CD8-positive, alpha-beta T cell (primary cell): ENCODE measurements at regions of chr11 and their contacts with region 1.

Region 1: GRCh38 chr11:94973099-94973968 is at the starts of genes CWC15 and KDM4D:
- DNase-seq: peak; percentile 90 to 97 (median 95)
- ATAC-seq: peak; percentile 98
- H3K4me3 ChIP-seq: peak within 1 kb of the TSS; percentile 70 to 90
- H3K4me3 Mint-ChIP-seq: peak within 1 kb of the TSS; percentile 99
- H3K27ac ChIP-seq: peak within 1 kb of the TSS; percentile 72 to 83
- H3K27ac Mint-ChIP-seq: peak within 1 kb of the TSS; percentile 99
- H3K4me1 ChIP-seq: peaks cover 14% of the 10 kb centered on the region
- H3K4me1 Mint-ChIP-seq: peaks cover 34% of the 10 kb centered on the region
- H3K27me3 ChIP-seq: no peaks in the 10 kb centered on the region
- H3K27me3 Mint-ChIP-seq: no peaks in the 10 kb centered on the region
- CTCF ChIP-seq: no peak
- total RNA-seq, gene CWC15: 127 to 129 TPM
- total RNA-seq, gene KDM4D: 0.14 TPM in 1 of 2 experiments, not detected in the other

Region 2: DNA sequence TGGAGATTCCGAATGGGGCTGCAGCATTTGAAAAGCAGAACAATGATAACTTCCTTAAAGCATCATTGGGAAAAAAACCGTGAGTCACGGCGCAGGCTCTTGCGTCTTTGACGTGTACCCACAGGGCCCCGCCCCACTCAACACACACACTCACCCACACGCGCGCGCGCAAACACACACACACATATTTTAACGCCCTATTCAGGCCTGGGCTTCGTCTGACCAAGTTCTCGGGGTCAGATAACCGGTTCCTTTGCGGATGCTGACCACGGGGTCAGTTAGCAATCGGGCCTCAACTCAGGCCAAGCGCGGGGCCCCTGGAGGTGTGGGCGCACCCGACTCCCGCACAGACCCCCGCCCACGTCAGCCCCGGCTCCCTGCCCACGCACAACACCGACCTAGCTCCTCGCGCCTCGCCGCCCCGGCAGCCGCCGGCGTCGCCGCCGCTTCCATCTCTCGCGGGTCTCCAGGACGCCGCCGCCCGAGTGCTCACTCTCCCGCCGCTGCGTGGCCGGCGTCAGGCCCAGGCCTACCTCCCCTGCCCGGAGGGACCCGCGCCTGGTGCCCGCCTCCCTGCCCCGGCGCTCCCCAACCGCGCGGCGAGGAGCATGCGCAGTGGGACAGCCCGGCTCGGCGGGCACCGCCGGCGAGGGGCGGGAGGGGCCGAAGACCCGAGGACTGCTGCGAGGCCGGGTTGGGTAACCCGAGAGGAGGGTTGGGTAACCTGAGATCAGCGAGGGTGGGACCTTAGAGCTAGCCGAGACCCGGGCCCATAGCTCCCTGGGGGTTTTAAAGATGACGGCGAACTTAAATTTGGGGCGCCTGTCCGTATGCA is 1775.7 kb before region 1 on chr11 and contains the start of gene SLC36A4:
- CTCF ChIA-PET with region 1: no interaction called
- POLR2A ChIA-PET with region 1: no interaction called
- intact Hi-C with region 1: loop called (anchors 10 kb)
- DNase-seq: peak; percentile 70 to 94 (median 86)
- ATAC-seq: peak; percentile 88
- H3K4me3 ChIP-seq: peak within 1 kb of the TSS; percentile 69 to 85
- H3K4me3 Mint-ChIP-seq: peak within 1 kb of the TSS; percentile 97
- H3K27ac ChIP-seq: peak within 1 kb of the TSS; percentile 72 to 93
- H3K27ac Mint-ChIP-seq: peak within 1 kb of the TSS; percentile 96
- H3K4me1 ChIP-seq: peaks cover 6% of the 10 kb centered on the region
- H3K4me1 Mint-ChIP-seq: peaks cover 31% of the 10 kb centered on the region
- H3K27me3 ChIP-seq: no peaks in the 10 kb centered on the region
- H3K27me3 Mint-ChIP-seq: no peaks in the 10 kb centered on the region
- CTCF ChIP-seq: no peak
- total RNA-seq, gene SLC36A4: 16.8 to 17.6 TPM

Region 3: GRCh38 chr11:93784152-93784934 is 1189.0 kb before region 1 on chr11 and contains the start of gene MED17:
- CTCF ChIA-PET with region 1: no interaction called
- POLR2A ChIA-PET with region 1: no interaction called
- intact Hi-C with region 1: loop called (anchors 10 kb)
- DNase-seq: peak; percentile 68 to 94 (median 89)
- ATAC-seq: peak; percentile 94
- H3K4me3 ChIP-seq: peak within 1 kb of the TSS; percentile 99 to 100
- H3K4me3 Mint-ChIP-seq: peak within 1 kb of the TSS; percentile 96
- H3K27ac ChIP-seq: peak within 1 kb of the TSS; percentile 94 to 96
- H3K27ac Mint-ChIP-seq: peak within 1 kb of the TSS; percentile 94
- H3K4me1 ChIP-seq: peaks cover 28% of the 10 kb centered on the region
- H3K4me1 Mint-ChIP-seq: peaks cover 40% of the 10 kb centered on the region
- H3K27me3 ChIP-seq: no peaks in the 10 kb centered on the region
- H3K27me3 Mint-ChIP-seq: no peaks in the 10 kb centered on the region
- CTCF ChIP-seq: peak; percentile 52
- total RNA-seq, gene MED17: 63.7 to 65.9 TPM

Region 4: GRCh38 chr11:94543695-94544645 is 429.4 kb before region 1 on chr11 and contains the start of gene FUT4:
- CTCF ChIA-PET with region 1: no interaction called
- POLR2A ChIA-PET with region 1: interaction called, 3 read pairs
- intact Hi-C with region 1: loop called in 1 of 2 experiments (anchors 5 kb)
- DNase-seq: peak; percentile 26 to 82 (median 69)
- ATAC-seq: peak; percentile 76
- H3K4me3 ChIP-seq: peak within 1 kb of the TSS; percentile 65 to 77
- H3K4me3 Mint-ChIP-seq: peak within 1 kb of the TSS; percentile 99
- H3K27ac ChIP-seq: peak within 1 kb of the TSS; percentile 87 to 90
- H3K27ac Mint-ChIP-seq: peak within 1 kb of the TSS; percentile 100
- H3K4me1 ChIP-seq: peaks cover 22% of the 10 kb centered on the region
- H3K4me1 Mint-ChIP-seq: peaks cover 39% of the 10 kb centered on the region
- H3K27me3 ChIP-seq: no peaks in the 10 kb centered on the region
- H3K27me3 Mint-ChIP-seq: no peaks in the 10 kb centered on the region
- CTCF ChIP-seq: no peak
- total RNA-seq, gene FUT4: 4.7 to 5.2 TPM

Region 5: GRCh38 chr11:95089620-95090542 is 116.5 kb after region 1 on chr11 and contains the start of gene ENDOD1:
- CTCF ChIA-PET with region 1: no interaction called
- POLR2A ChIA-PET with region 1: interaction called, 12 read pairs
- intact Hi-C with region 1: loop called (anchors 1 to 2 kb)
- DNase-seq: peak; percentile 75 to 92 (median 83)
- ATAC-seq: peak; percentile 94
- H3K4me3 ChIP-seq: peak within 1 kb of the TSS; percentile 66 to 78
- H3K4me3 Mint-ChIP-seq: peak within 1 kb of the TSS; percentile 93
- H3K27ac ChIP-seq: peak within 1 kb of the TSS; percentile 77 to 84
- H3K27ac Mint-ChIP-seq: peak within 1 kb of the TSS; percentile 99
- H3K4me1 ChIP-seq: peaks cover 25% of the 10 kb centered on the region
- H3K4me1 Mint-ChIP-seq: peaks cover 50% of the 10 kb centered on the region
- H3K27me3 ChIP-seq: no peaks in the 10 kb centered on the region
- H3K27me3 Mint-ChIP-seq: no peaks in the 10 kb centered on the region
- CTCF ChIP-seq: no peak
- total RNA-seq, gene ENDOD1: 5.6 to 5.9 TPM

Region 6: DNA sequence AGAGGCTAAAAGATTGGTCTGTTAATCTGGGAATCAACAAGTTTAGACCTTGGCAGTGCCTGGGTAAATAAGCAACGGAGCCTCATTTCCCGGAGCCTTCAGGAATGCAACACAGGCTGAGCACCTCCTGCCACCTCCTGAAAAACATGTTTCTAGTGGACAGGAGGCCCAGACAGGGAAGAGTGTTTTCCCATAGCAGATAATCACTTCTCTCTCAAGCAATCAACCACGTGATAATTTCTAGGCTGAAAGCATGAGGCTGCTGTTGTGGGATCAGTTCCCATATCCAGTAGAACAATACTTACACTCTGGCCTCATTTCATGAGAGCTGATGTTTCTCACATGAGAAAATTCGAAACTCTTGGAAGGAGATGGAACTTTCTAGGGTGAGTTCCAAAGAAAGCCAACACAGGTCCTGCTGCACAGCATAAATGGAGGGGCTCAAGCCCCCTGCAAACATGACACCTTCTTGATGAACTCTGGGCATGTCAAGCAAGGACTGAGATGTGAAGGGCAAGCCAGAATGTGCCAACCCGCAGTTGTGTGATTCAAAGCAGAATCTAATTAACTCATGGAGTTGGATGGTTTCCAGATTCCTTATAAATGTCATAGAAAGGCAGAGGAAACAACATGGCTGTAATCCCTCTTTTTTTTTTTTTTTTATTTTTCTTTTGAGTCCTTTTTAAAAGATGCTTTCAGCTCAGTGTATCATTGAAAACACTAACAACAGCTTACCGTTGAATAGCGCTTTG is 486.1 kb after region 1 on chr11:
- CTCF ChIA-PET with region 1: no interaction called
- POLR2A ChIA-PET with region 1: no interaction called
- intact Hi-C with region 1: no loop called
- DNase-seq: no peak
- ATAC-seq: no peak
- H3K4me3 ChIP-seq: no peak overlapping the region
- H3K4me3 Mint-ChIP-seq: no peak overlapping the region
- H3K27ac ChIP-seq: no peak overlapping the region
- H3K27ac Mint-ChIP-seq: no peak overlapping the region
- H3K4me1 ChIP-seq: no peaks in the 10 kb centered on the region
- H3K4me1 Mint-ChIP-seq: no peaks in the 10 kb centered on the region
- H3K27me3 ChIP-seq: no peaks in the 10 kb centered on the region
- H3K27me3 Mint-ChIP-seq: no peaks in the 10 kb centered on the region
- CTCF ChIP-seq: no peak

Region 7: DNA sequence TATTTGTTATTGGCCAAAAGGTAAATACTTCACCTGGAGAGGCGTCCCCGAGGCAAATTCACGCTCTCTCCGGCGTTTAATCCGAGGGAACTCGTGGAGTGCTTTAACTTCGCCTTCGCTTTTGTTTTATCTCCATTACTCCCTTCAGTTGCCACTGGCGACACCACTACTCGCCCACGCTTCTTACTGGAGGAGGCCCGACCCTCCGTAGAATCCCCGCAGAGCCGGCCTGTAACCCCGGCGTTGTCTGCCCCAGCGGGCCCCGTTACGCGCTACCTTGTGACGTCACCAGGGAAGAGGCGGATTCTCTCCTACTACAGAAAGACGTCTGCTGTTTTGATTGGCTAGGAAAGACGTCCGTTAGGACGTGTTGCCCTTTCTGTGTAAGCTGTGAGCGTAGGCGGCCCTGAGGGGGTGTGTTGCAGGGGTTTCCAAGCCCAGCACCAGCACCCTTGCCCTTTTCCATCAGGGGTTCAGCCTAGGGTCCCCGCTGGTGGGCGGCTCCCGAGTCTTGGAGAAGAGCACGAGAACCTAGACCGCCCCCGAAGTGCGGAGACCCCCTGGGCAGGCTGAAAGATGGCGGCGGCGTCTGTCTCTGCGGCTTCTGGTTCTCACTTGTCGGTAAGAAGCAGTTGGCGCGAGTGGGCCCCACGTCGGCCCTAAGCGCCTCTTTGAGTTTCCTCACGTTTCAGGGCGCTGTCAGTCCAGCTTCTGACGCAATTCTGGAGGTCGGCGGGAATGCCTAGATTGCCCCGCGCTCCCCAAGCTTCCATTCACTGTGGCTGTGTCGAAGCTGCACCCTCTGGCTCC is 817.0 kb after region 1 on chr11 and contains the start of gene CEP57:
- CTCF ChIA-PET with region 1: no interaction called
- POLR2A ChIA-PET with region 1: no interaction called
- intact Hi-C with region 1: loop called (anchors 1 kb)
- DNase-seq: peak; percentile 80 to 98 (median 94)
- ATAC-seq: peak; percentile 54
- H3K4me3 ChIP-seq: peak within 1 kb of the TSS; percentile 86 to 93
- H3K4me3 Mint-ChIP-seq: peak within 1 kb of the TSS; percentile 99
- H3K27ac ChIP-seq: peak within 1 kb of the TSS; percentile 99 to 100
- H3K27ac Mint-ChIP-seq: peak within 1 kb of the TSS; percentile 100
- H3K4me1 ChIP-seq: peaks cover 29% of the 10 kb centered on the region
- H3K4me1 Mint-ChIP-seq: peaks cover 63% of the 10 kb centered on the region
- H3K27me3 ChIP-seq: no peaks in the 10 kb centered on the region
- H3K27me3 Mint-ChIP-seq: no peaks in the 10 kb centered on the region
- CTCF ChIP-seq: no peak
- total RNA-seq, gene CEP57: 53.2 to 53.7 TPM